ENCODE measurements at regions of chr12 and their contacts with region 1.

Region 1: DNA sequence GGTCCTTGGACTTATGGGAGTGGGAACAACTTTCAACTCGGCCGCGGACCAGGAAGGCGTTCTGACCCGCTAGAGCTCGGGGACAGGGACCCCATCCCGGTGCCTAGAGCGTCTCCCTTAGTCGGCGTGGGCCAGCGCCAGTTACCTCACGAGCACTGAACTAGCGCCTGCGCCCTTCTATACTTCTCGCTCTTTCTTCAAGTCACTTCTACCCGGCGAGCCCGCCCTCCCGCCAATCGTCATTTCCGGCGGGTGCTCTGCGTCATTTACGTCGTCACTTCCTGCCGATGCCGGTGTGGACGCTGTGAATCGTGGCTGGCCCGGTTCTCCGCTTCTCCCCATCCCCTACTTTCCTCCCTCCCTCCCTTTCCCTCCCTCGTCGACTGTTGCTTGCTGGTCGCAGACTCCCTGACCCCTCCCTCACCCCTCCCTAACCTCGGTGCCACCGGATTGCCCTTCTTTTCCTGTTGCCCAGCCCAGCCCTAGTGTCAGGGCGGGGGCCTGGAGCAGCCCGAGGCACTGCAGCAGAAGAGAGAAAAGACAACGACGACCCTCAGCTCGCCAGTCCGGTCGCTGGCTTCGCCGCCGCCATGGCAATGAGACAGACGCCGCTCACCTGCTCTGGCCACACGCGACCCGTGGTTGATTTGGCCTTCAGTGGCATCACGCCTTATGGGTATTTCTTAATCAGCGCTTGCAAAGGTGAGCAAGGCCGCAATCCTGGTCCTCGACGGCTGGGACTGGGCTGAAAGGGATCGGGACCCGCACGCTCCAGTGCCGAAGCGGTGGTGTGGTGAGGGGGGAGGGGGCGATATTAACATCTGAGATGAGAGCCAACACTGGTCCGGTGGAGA is at the start of gene STRAP:
- DNase-seq: peak; percentile 95
- ATAC-seq: peak; percentile 94
- H3K4me3 Mint-ChIP-seq: peak within 1 kb of the TSS; percentile 99
- H3K27ac Mint-ChIP-seq: peak within 1 kb of the TSS; percentile 99
- H3K4me1 Mint-ChIP-seq: peaks cover 53% of the 10 kb centered on the region
- H3K27me3 Mint-ChIP-seq: no peaks in the 10 kb centered on the region
- CTCF ChIP-seq: no peak
- total RNA-seq, gene STRAP: 78.1 and 82.3 TPM in 2 replicates

Region 2: GRCh38 chr12:15522565-15523187 is 359.7 kb before region 1 on chr12:
- CTCF ChIA-PET with region 1: no interaction called
- POLR2A ChIA-PET with region 1: no interaction called
- intact Hi-C with region 1: loop called (anchors 1 kb)
- DNase-seq: no peak
- ATAC-seq: no peak
- H3K4me3 Mint-ChIP-seq: no peak overlapping the region
- H3K27ac Mint-ChIP-seq: no peak overlapping the region
- H3K4me1 Mint-ChIP-seq: peaks cover 12% of the 10 kb centered on the region
- H3K27me3 Mint-ChIP-seq: peaks cover 15% of the 10 kb centered on the region
- CTCF ChIP-seq: no peak

Region 3: GRCh38 chr12:15575671-15576541 is 306.4 kb before region 1 on chr12:
- CTCF ChIA-PET with region 1: no interaction called
- POLR2A ChIA-PET with region 1: no interaction called
- intact Hi-C with region 1: loop called (anchors 1 kb)
- DNase-seq: no peak
- ATAC-seq: no peak
- H3K4me3 Mint-ChIP-seq: no peak overlapping the region
- H3K27ac Mint-ChIP-seq: no peak overlapping the region
- H3K4me1 Mint-ChIP-seq: peaks cover 10% of the 10 kb centered on the region
- H3K27me3 Mint-ChIP-seq: no peaks in the 10 kb centered on the region
- CTCF ChIP-seq: no peak

Region 4: DNA sequence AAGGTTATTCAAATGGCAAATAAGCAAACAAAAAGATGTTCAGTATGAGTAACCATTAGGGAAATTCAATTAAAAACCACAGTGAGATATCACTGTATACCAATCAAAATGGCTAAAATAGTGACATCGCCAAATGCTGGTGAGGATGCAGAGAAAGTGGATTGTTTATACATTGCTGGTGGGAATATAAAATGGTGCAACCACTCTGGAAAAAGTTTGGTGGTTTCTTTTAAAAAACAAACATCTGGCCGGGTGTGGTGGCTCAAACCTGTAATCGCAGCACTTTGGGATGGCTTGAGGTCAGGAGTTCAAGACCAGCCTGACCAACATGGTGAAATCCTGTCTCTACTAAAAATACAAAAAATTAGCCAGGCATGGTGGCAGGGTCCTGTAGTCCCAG is 14.2 kb before region 1 on chr12:
- CTCF ChIA-PET with region 1: no interaction called
- POLR2A ChIA-PET with region 1: no interaction called
- intact Hi-C with region 1: no loop called
- DNase-seq: no peak
- ATAC-seq: no peak
- H3K4me3 Mint-ChIP-seq: no peak overlapping the region
- H3K27ac Mint-ChIP-seq: no peak overlapping the region
- H3K4me1 Mint-ChIP-seq: peaks cover 7% of the 10 kb centered on the region
- H3K27me3 Mint-ChIP-seq: no peaks in the 10 kb centered on the region
- CTCF ChIP-seq: no peak

Region 5: DNA sequence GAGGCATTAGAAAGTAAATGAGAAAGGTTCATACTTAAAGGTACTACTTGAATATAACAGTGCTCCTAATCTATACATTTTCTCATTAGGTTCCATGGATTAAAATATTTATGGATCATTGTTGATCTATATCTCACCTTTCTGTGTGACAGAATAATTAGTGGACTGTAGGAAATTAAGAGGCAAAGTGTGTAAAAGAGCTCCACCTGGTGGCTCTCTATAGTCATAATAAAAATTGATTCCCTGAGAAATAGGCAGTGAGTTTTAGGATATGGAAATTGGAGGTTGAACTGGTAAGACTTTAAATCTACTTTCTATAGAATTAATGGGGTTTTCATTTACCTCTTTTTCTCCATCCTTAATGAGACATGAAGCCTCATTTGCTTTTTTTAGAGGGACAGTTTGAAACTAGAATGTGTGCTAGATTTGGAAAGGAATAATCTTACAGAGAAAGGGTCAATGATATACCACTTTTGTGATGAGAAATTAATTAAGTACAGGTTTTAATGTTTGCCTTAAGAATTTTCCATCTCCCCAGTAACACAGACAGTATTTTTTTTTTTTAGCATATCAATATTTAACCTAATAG is 17.0 kb after region 1 on chr12:
- CTCF ChIA-PET with region 1: interaction called, 8 read pairs
- POLR2A ChIA-PET with region 1: interaction called, 16 read pairs
- intact Hi-C with region 1: loop called (anchors 2 kb)
- DNase-seq: no peak
- ATAC-seq: peak; percentile 57
- H3K4me3 Mint-ChIP-seq: no peak overlapping the region
- H3K27ac Mint-ChIP-seq: no peak overlapping the region
- H3K4me1 Mint-ChIP-seq: peaks cover 5% of the 10 kb centered on the region
- H3K27me3 Mint-ChIP-seq: no peaks in the 10 kb centered on the region
- CTCF ChIP-seq: no peak

Region 6: DNA sequence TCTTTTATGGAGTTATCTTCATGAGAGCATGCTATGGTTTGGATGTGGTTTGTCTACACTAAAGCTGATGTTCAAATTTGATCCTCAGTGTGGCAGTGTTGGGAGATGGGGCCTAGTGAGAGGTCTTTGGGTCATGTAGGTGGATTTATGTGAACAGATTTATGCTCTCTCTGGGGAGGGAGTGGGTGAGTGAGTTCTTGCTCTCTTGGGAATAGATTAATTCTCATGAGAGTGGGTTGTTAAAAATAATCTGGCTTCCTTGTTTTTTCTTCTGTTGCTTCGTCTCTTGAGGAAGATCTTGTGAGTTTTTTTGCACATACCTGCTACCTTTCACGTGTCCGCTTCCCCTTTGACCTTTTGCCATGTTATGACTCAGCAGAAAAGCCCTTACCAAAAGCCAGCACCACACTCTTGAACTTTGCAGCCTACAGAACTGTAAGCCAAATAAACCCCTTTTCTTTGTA is 49.3 kb after region 1 on chr12:
- CTCF ChIA-PET with region 1: no interaction called
- POLR2A ChIA-PET with region 1: no interaction called
- intact Hi-C with region 1: loop called (anchors 1 kb)
- DNase-seq: no peak
- ATAC-seq: peak; percentile 99
- H3K4me3 Mint-ChIP-seq: peak overlapping the region; percentile 2
- H3K27ac Mint-ChIP-seq: peak overlapping the region; percentile 13
- H3K4me1 Mint-ChIP-seq: peaks cover 22% of the 10 kb centered on the region
- H3K27me3 Mint-ChIP-seq: no peaks in the 10 kb centered on the region
- CTCF ChIP-seq: no peak

Measured in activated B cell treated with CpG ODN at 0.5 μM for 24 hours (primary cell).